CD8-positive, alpha-beta T cell (primary cell): ENCODE measurements at regions of chr1 and their contacts with region 1.

Region 1: DNA sequence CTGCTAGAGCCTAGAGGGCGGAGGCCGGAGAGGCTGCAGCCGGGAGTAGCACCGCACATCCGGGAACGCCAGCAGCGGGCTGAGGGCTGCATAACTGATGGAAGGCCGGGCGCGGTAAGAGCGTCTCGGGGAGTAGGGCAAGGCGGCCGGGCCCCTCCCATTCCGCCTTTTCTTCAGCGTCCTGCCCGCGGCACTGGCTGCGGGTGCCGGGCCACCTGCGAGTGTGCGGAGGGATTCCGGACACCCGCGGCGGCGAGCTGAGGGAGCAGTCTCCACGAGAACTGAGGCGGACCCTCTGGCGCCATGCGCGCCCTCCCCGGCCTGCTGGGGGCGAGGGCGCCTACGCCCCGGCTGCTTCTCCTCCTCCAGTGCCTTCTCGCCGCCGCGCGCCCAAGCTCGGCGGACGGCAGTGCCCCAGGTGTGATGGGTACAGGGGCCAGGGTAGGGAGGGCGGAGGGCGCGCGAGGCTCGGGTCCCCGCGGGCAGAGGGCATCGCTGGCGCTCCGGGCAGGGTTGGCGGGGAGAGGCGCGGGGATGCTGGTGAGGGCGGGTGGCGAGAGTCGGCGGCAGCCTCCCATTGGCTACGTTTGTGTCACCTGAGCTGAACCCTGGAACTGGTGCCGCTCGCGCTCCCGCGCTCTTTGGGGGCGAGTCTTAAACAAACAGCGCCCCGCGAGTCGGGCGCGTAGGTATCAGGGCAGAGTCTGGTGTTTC is 334.4 kb downstream of the SRGAP2C start:
- DNase-seq: peak; percentile 55 to 91 (median 80)
- ATAC-seq: peak; percentile 87
- H3K4me3 ChIP-seq: peak overlapping the region; percentile 71 to 89
- H3K4me3 Mint-ChIP-seq: peak overlapping the region; percentile 96
- H3K27ac ChIP-seq: peak overlapping the region; percentile 57 to 70
- H3K27ac Mint-ChIP-seq: peak overlapping the region; percentile 98
- H3K4me1 ChIP-seq: peaks cover 37% of the 10 kb centered on the region
- H3K4me1 Mint-ChIP-seq: peaks cover 62% of the 10 kb centered on the region
- H3K27me3 ChIP-seq: no peaks in the 10 kb centered on the region
- H3K27me3 Mint-ChIP-seq: no peaks in the 10 kb centered on the region
- CTCF ChIP-seq: no peak

Region 2: GRCh38 chr1:121445679-121446078 is 73.5 kb before region 1 on chr1:
- CTCF ChIA-PET with region 1: interaction called, 8 read pairs
- POLR2A ChIA-PET with region 1: interaction called, 4 read pairs
- intact Hi-C with region 1: loop called in 1 of 2 experiments (anchors 5 kb)
- DNase-seq: no peak
- ATAC-seq: no peak
- H3K4me3 ChIP-seq: no peak overlapping the region
- H3K4me3 Mint-ChIP-seq: no peak overlapping the region
- H3K27ac ChIP-seq: no peak overlapping the region
- H3K27ac Mint-ChIP-seq: no peak overlapping the region
- H3K4me1 ChIP-seq: no peaks in the 10 kb centered on the region
- H3K4me1 Mint-ChIP-seq: peaks cover 2% of the 10 kb centered on the region
- H3K27me3 ChIP-seq: no peaks in the 10 kb centered on the region
- H3K27me3 Mint-ChIP-seq: no peaks in the 10 kb centered on the region
- CTCF ChIP-seq: no peak

Region 3: DNA sequence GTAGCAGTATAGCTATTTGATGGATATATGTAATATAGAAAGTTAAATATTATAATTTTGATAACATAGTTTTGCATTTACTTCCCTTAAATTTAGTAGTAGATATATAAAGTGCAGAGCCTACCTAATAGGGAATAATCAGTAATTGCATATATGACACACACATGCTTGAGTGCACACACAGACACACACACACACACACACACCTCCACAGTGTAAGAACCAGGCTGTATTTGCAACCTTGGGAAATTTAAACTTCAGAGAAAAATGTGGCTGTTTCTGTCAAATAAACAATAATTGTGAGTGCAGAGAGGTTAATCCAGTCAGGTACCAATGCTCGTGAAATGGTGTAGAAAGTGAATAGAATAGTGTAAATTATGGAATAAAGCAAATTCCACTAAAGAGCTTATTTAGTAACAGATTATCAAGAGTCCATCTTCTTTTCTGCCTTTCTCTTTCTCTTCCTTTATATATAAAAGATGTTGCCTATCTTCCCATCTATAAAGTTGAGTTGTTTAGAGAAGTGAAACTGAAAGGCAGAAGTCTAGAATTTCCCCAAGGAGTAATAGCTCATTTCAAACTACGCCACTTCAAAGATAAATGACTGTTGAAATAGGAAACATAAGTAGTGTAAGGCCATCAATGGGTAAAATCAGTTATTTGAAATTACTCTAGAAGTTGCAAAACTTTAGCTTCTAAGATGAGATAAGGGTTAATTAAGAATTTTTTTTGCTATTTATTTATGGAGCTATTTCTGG is 60.7 kb before region 1 on chr1:
- CTCF ChIA-PET with region 1: no interaction called
- POLR2A ChIA-PET with region 1: no interaction called
- intact Hi-C with region 1: loop called in 1 of 2 experiments (anchors 2 kb)
- DNase-seq: peak in 2 of 9 experiments; percentile 43 to 66
- ATAC-seq: peak; percentile 58
- H3K4me3 ChIP-seq: peak overlapping the region; percentile 16 to 30
- H3K4me3 Mint-ChIP-seq: peak overlapping the region; percentile 76
- H3K27ac ChIP-seq: no peak overlapping the region
- H3K27ac Mint-ChIP-seq: peak overlapping the region; percentile 77
- H3K4me1 ChIP-seq: peaks cover 5% of the 10 kb centered on the region
- H3K4me1 Mint-ChIP-seq: peaks cover 10% of the 10 kb centered on the region
- H3K27me3 ChIP-seq: no peaks in the 10 kb centered on the region
- H3K27me3 Mint-ChIP-seq: no peaks in the 10 kb centered on the region
- CTCF ChIP-seq: no peak

Region 4: DNA sequence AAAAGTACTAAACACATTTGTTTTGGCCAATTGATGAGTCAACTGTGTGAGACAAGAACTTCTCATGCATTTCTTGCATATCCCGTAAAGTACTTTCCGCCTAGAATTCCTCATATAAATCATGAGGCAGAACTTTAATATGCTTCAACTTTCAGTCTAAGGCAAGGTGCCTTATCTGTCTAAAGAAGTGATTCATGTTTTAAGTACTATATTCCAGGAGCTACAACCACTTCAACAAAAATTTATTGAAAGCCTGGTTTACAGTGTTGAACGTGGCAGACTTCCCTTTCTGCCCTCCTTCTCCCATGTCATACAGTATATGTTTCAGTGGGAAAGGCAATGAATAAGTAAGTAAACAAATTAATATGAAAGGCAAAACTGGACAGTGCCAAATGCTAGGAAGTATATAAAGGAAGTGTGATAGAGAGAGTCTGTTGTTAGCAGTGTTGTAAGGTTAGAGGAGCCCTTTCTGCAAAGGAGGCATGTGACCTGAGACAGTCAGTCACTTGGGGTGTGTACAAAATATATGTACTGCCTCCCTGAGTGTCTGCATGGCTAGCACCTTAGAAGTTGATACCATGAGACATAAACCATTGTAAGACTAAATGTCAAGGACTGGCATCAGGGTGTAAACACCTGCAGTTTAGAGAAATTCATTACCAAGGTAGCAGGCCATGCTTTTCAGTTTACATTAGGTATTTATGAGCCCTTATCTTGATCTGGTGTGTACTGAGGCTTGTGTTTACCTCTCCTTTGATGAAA is 27.8 kb after region 1 on chr1:
- CTCF ChIA-PET with region 1: interaction called, 6 read pairs
- POLR2A ChIA-PET with region 1: interaction called, 8 read pairs
- intact Hi-C with region 1: loop called (anchors 2 to 5 kb)
- DNase-seq: peak in 2 of 9 experiments; percentile 5
- ATAC-seq: peak; percentile 27
- H3K4me3 ChIP-seq: no peak overlapping the region
- H3K4me3 Mint-ChIP-seq: no peak overlapping the region
- H3K27ac ChIP-seq: no peak overlapping the region
- H3K27ac Mint-ChIP-seq: no peak overlapping the region
- H3K4me1 ChIP-seq: peaks cover 9% of the 10 kb centered on the region
- H3K4me1 Mint-ChIP-seq: peaks cover 32% of the 10 kb centered on the region
- H3K27me3 ChIP-seq: no peaks in the 10 kb centered on the region
- H3K27me3 Mint-ChIP-seq: no peaks in the 10 kb centered on the region
- CTCF ChIP-seq: no peak

Region 5: DNA sequence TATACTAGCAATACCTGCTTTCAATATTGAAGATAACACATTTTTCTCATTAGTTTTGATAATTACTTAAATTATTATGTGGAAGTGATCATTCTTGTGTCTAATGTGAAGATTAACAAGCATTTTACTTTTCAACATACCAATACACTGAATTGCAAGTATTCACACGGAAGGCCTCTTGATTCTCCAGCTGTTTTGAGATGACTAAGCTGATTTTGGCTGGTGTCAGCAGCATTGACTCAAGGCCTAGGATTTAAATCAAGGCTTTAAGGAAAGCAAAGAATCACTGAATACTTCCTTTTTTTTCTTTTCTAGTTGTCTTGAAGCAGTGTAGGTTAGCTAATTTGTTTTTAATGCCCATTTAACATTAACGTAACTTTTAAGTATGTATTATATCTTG is 39.3 kb after region 1 on chr1:
- CTCF ChIA-PET with region 1: interaction called, 3 read pairs
- POLR2A ChIA-PET with region 1: interaction called, 4 read pairs
- intact Hi-C with region 1: loop called in 1 of 2 experiments (anchors 5 kb)
- DNase-seq: no peak
- ATAC-seq: no peak
- H3K4me3 ChIP-seq: no peak overlapping the region
- H3K4me3 Mint-ChIP-seq: no peak overlapping the region
- H3K27ac ChIP-seq: no peak overlapping the region
- H3K27ac Mint-ChIP-seq: no peak overlapping the region
- H3K4me1 ChIP-seq: peaks cover 4% of the 10 kb centered on the region
- H3K4me1 Mint-ChIP-seq: peaks cover 27% of the 10 kb centered on the region
- H3K27me3 ChIP-seq: no peaks in the 10 kb centered on the region
- H3K27me3 Mint-ChIP-seq: no peaks in the 10 kb centered on the region
- CTCF ChIP-seq: no peak